A673 (cell line): ENCODE measurements at regions of chr10 and their contacts with region 1.

Region 1: DNA sequence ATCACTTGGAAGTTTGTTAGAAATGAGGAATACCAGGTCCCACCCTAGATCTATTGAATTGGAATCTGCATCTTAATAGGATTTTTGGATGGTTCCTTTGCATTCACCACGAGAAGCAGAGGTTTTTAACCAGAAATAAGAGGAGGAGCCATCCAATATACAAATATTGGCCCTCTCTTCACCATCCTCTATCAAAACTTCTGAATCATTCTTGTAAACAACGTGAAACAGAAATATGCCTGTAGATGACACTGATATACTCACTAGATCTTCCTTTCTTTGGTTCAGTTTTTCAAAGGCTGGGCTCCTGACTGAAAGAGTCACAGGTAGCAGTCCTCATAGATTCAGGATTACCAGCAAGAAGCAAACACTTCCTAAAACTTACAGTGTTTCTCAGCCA is 39.5 kb downstream of the ZNF365 start:
- DNase-seq: no peak
- H3K4me3 ChIP-seq: no peak overlapping the region
- H3K27ac ChIP-seq: no peak overlapping the region
- H3K4me1 ChIP-seq: no peaks in the 10 kb centered on the region
- H3K27me3 ChIP-seq: no peaks in the 10 kb centered on the region
- CTCF ChIP-seq: no peak

Region 2: DNA sequence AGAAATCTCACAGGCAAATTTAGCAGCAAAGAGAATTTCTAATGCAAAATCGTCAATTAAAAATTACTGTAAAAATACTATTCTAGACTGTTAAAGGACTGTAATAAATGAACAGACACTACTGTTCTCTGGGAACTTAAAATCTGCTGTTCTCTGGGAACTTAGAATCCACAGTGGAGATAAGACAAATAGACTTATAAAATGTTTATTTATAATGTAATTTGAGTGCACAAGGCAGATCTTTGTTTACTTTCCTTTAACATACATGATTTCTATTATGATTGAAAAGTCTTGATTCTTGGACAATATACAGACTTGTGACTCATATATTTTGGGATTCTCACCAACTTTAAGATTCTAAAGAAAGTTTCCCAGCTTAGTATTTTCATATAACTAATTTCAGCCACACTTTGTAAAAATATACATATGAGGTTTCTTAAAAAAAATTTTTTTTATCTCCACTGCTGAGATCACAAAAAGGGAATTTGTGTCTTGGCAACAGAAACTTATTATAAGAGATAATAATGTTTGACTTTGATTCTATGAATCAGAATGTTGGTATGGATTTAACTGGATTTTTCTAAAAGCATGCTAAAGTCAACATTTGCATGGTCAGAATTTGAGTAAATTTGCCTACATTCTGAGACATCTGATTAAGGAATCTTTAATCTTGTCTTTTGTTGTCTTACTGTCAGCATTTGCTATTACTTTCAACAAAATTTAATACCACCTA is 1303.3 kb before region 1 on chr10:
- CTCF ChIA-PET with region 1: no interaction called
- POLR2A ChIA-PET with region 1: interaction called, 12 read pairs
- intact Hi-C with region 1: no loop called
- DNase-seq: no peak
- H3K4me3 ChIP-seq: no peak overlapping the region
- H3K27ac ChIP-seq: no peak overlapping the region
- H3K4me1 ChIP-seq: no peaks in the 10 kb centered on the region
- H3K27me3 ChIP-seq: no peaks in the 10 kb centered on the region
- CTCF ChIP-seq: no peak

Region 3: GRCh38 chr10:62437696-62438095 is 24.0 kb after region 1 on chr10:
- CTCF ChIA-PET with region 1: no interaction called
- POLR2A ChIA-PET with region 1: no interaction called
- intact Hi-C with region 1: no loop called
- DNase-seq: peak; percentile 90
- H3K4me3 ChIP-seq: no peak overlapping the region
- H3K27ac ChIP-seq: no peak overlapping the region
- H3K4me1 ChIP-seq: peaks cover 25% of the 10 kb centered on the region
- H3K27me3 ChIP-seq: no peaks in the 10 kb centered on the region
- CTCF ChIP-seq: peak; percentile 89